T-cell (primary cell): ENCODE measurements at regions of chr6 and their contacts with region 1.

Region 1: GRCh38 chr6:161017766-161018564 is 26.4 kb downstream of the MAP3K4 start:
- DNase-seq: no peak
- ATAC-seq: no peak
- H3K4me3 ChIP-seq: no peak overlapping the region
- H3K4me3 Mint-ChIP-seq: no peak overlapping the region
- H3K27ac ChIP-seq: no peak overlapping the region
- H3K27ac Mint-ChIP-seq: no peak overlapping the region
- H3K4me1 ChIP-seq: no peaks in the 10 kb centered on the region
- H3K4me1 Mint-ChIP-seq: peaks cover 51 to 71% (median 59%) of the 10 kb centered on the region in 3 donors
- H3K27me3 ChIP-seq: no peaks in the 10 kb centered on the region
- H3K27me3 Mint-ChIP-seq: no peaks in the 10 kb centered on the region

Region 2: GRCh38 chr6:160756871-160757270 is 261.1 kb before region 1 on chr6:
- CTCF ChIA-PET with region 1: no interaction called
- POLR2A ChIA-PET with region 1: no interaction called
- DNase-seq: no peak
- ATAC-seq: no peak
- H3K4me3 ChIP-seq: no peak overlapping the region
- H3K4me3 Mint-ChIP-seq: no peak overlapping the region
- H3K27ac ChIP-seq: no peak overlapping the region
- H3K27ac Mint-ChIP-seq: no peak overlapping the region
- H3K4me1 ChIP-seq: no peaks in the 10 kb centered on the region
- H3K4me1 Mint-ChIP-seq: no peaks in the 10 kb centered on the region
- H3K27me3 ChIP-seq: peaks cover 0 to 5% of the 10 kb centered on the region in 2 experiments
- H3K27me3 Mint-ChIP-seq: peaks cover 30 to 32% of the 10 kb centered on the region in 2 donors

Region 3: GRCh38 chr6:161038229-161039031 is 20.5 kb after region 1 on chr6:
- CTCF ChIA-PET with region 1: no interaction called
- POLR2A ChIA-PET with region 1: interaction called in 1 of 2 experiments, 16 read pairs
- DNase-seq: no peak
- ATAC-seq: no peak
- H3K4me3 ChIP-seq: no peak overlapping the region
- H3K4me3 Mint-ChIP-seq: no peak overlapping the region
- H3K27ac ChIP-seq: no peak overlapping the region
- H3K27ac Mint-ChIP-seq: peak overlapping the region in 1 of 2 donors; percentile 52
- H3K4me1 ChIP-seq: no peaks in the 10 kb centered on the region
- H3K4me1 Mint-ChIP-seq: peaks cover 19 to 35% (median 24%) of the 10 kb centered on the region in 3 donors
- H3K27me3 ChIP-seq: no peaks in the 10 kb centered on the region
- H3K27me3 Mint-ChIP-seq: no peaks in the 10 kb centered on the region

Region 4: DNA sequence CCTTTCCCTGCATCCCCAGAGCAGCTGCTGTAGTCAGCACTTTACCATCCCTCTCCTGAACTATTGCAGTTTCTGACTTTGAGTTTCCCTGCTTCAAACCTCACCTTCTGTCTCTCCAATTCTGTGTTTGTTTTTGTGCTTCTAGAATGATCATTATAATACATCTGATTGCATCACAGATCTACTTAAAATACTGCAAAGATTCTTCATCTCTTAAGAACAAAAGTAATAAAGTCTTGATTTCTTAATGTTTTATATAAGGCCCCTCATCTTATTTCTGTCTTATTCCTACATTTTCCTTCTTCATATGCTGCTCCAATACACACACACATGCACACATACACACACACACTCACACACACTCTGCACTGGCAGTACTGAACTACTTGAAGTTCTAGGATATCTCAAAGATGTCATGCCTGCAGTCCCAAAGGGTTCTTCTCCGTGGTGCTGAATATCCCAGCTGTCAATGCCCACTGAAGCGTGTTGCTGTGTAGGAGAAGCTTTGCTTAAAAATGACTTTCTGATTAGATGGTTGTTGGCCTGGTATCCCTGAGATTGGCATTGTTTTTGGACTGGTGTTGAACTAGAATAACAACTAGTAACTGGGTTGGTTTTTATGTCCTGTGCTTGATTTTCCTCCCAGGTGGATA is 70.8 kb after region 1 on chr6:
- CTCF ChIA-PET with region 1: no interaction called
- POLR2A ChIA-PET with region 1: no interaction called
- DNase-seq: no peak
- ATAC-seq: no peak
- H3K4me3 ChIP-seq: no peak overlapping the region
- H3K4me3 Mint-ChIP-seq: no peak overlapping the region
- H3K27ac ChIP-seq: no peak overlapping the region
- H3K27ac Mint-ChIP-seq: no peak overlapping the region
- H3K4me1 ChIP-seq: no peaks in the 10 kb centered on the region
- H3K4me1 Mint-ChIP-seq: peaks cover 0 to 11% (median 5%) of the 10 kb centered on the region in 3 donors
- H3K27me3 ChIP-seq: no peaks in the 10 kb centered on the region
- H3K27me3 Mint-ChIP-seq: no peaks in the 10 kb centered on the region